Posterior vena cava (tissue), 2 donors: ENCODE measurements at regions of chrX and their contacts with region 1.

Region 1: GRCh38 chrX:131728295-131729145 is 184.6 kb downstream of the OR13H1 start:
- DNase-seq: no peak

Region 2: GRCh38 chrX:131710431-131711045 is 18.0 kb before region 1 on chrX:
- intact Hi-C with region 1: no loop called
- DNase-seq: no peak

Region 3: GRCh38 chrX:131783555-131784308 is 55.2 kb after region 1 on chrX:
- intact Hi-C with region 1: loop called in 1 of 2 experiments (anchors 10 kb)
- DNase-seq: no peak